HepG2 (cell line): ENCODE measurements at regions of chr11 and their contacts with region 1.

Region 1: GRCh38 chr11:65637794-65638317 is at the start of gene SIPA1:
- DNase-seq: peak; percentile 88
- ATAC-seq: peak; percentile 83
- H3K4me3 ChIP-seq: peak within 1 kb of the TSS; percentile 52 to 88 (median 73); a peak in 5 of 6 replicates
- H3K27ac ChIP-seq: peak within 1 kb of the TSS; percentile 61
- H3K4me1 ChIP-seq: peaks cover 33% of the 10 kb centered on the region
- H3K27me3 ChIP-seq: no peaks in the 10 kb centered on the region
- CTCF ChIP-seq: peak; percentile 74
- EP300 ChIP-seq: no peak
- POLR2A ChIP-seq: peak in 1 of 2 experiments; percentile 62; a peak in 3 of 4 replicates
- RAD21 ChIP-seq: peak; percentile 63
- total RNA-seq, gene SIPA1: 5.4 and 5.8 TPM in 2 replicates

Region 2: DNA sequence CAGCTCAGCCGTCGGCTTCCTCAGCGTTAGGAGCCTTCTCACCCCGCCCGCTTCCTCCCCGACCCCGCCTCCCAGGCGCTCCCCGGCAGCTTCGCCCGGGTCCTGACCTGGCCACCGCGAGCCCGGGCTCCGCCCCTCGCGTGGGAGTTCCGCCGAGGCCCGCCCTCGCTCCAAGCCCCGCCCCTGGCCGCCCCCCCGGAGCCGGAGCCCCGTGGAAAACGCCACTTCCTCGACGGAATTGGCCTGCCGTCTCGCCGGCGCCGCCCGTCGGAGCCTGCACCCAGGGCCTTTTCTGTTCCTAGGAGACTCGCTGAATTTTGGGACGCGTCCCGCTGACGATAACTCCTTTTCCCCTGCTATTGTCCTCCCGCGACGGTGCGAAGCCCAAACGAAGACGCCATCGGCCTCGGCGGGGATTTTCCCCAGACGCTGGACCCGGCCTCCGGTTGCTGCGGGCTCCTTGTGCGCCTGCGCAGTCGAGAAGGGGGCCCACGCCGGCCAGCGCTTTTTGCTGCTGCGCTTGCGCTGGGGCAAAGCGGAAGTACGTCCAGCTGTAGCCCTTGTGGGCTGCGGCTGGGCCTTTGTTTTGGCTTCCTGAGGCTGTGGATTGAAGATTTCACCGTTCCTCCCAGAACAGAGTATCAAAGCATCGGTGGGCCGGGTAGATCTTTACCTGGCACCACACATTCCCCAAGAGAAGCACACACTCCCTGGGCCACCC is 14.8 kb after region 1 on chr11:
- CTCF ChIA-PET with region 1: no interaction called
- POLR2A ChIA-PET with region 1: interaction called, 78 read pairs
- in situ Hi-C with region 1: no loop called
- intact Hi-C with region 1: no loop called
- DNase-seq: peak; percentile 86
- ATAC-seq: peak; percentile 77
- H3K4me3 ChIP-seq: peak overlapping the region; percentile 48 to 76 (median 54); a peak in 5 of 6 replicates
- H3K27ac ChIP-seq: peak overlapping the region; percentile 98
- H3K4me1 ChIP-seq: peaks cover 35% of the 10 kb centered on the region
- H3K27me3 ChIP-seq: no peaks in the 10 kb centered on the region
- CTCF ChIP-seq: no peak
- EP300 ChIP-seq: no peak
- POLR2A ChIP-seq: peak; percentile 48 to 53; a peak in 3 of 4 replicates
- RAD21 ChIP-seq: peak; percentile 8; the same call in 1 of the 2 replicates

Region 3: GRCh38 chr11:65662799-65663638 is 25.2 kb after region 1 on chr11 and contains the start of gene RELA:
- CTCF ChIA-PET with region 1: no interaction called
- POLR2A ChIA-PET with region 1: interaction called, 17 read pairs
- in situ Hi-C with region 1: no loop called
- intact Hi-C with region 1: no loop called
- DNase-seq: peak; percentile 81
- ATAC-seq: peak; percentile 84
- H3K4me3 ChIP-seq: peak within 1 kb of the TSS; percentile 81 to 94 (median 88)
- H3K27ac ChIP-seq: peak within 1 kb of the TSS; percentile 86
- H3K4me1 ChIP-seq: peaks cover 10% of the 10 kb centered on the region
- H3K27me3 ChIP-seq: no peaks in the 10 kb centered on the region; a peak in 1 of 5 replicates
- CTCF ChIP-seq: no peak
- EP300 ChIP-seq: no peak
- POLR2A ChIP-seq: peak; percentile 53 to 81
- RAD21 ChIP-seq: no peak; the same call in 1 of the 2 replicates
- total RNA-seq, gene RELA: 18.7 and 21.4 TPM in 2 replicates